K562 (cell line): ENCODE measurements at regions of chr12 and their contacts with region 1.

Region 1: GRCh38 chr12:122306407-122306806 is 40.1 kb upstream of the VPS33A start:
- DNase-seq: peak; percentile 41 to 72 (median 53)
- ATAC-seq: peak; percentile 99
- H3K4me3 ChIP-seq: no peak overlapping the region
- H3K27ac ChIP-seq: no peak overlapping the region
- H3K4me1 ChIP-seq: no peaks in the 10 kb centered on the region
- H3K27me3 ChIP-seq: no peaks in the 10 kb centered on the region
- CTCF ChIP-seq: peak; percentile 69 to 84 (median 71)
- EP300 ChIP-seq: no peak
- POLR2A ChIP-seq: no peak
- RAD21 ChIP-seq: peak; percentile 53 to 74

Region 2: DNA sequence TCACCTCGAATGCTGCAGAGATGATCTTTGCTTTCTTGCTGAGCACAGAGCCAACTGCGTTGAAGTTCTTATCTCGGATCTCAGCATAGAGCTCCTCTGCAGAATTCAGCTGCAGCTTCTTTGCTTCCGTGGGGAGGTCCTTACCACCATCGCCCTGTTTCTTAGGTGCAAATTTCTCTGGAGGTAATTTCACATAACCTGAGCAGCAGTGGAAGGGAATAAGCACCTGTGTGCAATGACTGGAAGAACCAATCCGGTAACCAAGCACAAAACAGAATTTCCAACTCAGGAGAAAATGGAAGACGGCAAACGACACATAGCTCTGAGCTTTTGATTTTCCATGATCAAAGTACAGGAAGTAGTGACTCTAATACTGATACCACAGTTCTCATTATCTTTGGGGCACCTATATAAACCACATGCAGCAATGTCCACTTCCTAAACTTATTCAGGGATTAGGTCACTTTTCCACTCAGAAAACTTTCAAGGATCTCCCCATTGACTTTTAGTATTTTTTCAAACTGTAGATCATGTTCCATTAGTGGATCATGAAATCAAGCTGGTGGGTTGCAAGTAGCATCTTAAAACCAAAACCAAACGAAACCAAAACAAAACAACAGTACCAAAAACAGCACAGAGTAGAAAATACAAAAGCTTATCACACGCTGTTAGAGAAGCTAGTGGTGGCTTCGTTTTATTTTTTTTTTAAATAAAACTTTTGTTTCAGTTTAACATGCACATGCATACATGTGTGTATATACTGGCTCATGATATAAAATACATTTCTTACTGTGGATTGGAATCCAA is 61.6 kb before region 1 on chr12:
- CTCF ChIA-PET with region 1: no interaction called
- POLR2A ChIA-PET with region 1: no interaction called
- in situ Hi-C with region 1: no loop called
- intact Hi-C with region 1: no loop called
- DNase-seq: no peak
- ATAC-seq: peak; percentile 65
- H3K4me3 ChIP-seq: no peak overlapping the region
- H3K27ac ChIP-seq: peak overlapping the region; percentile 13; the same call in 1 of the 3 replicates
- H3K4me1 ChIP-seq: peaks cover 2 to 9% of the 10 kb centered on the region in 2 experiments; a peak in 3 of 5 replicates
- H3K27me3 ChIP-seq: no peaks in the 10 kb centered on the region
- CTCF ChIP-seq: no peak
- EP300 ChIP-seq: no peak
- POLR2A ChIP-seq: no peak
- RAD21 ChIP-seq: no peak

Region 3: GRCh38 chr12:122356192-122356635 is 49.8 kb after region 1 on chr12:
- CTCF ChIA-PET with region 1: interaction called, 4 read pairs
- POLR2A ChIA-PET with region 1: no interaction called
- in situ Hi-C with region 1: no loop called
- intact Hi-C with region 1: loop called (anchors 1 kb)
- DNase-seq: peak; percentile 33 to 69 (median 56)
- ATAC-seq: peak; percentile 98
- H3K4me3 ChIP-seq: no peak overlapping the region
- H3K27ac ChIP-seq: no peak overlapping the region
- H3K4me1 ChIP-seq: no peaks in the 10 kb centered on the region
- H3K27me3 ChIP-seq: no peaks in the 10 kb centered on the region
- CTCF ChIP-seq: peak; percentile 60 to 82 (median 82)
- EP300 ChIP-seq: no peak
- POLR2A ChIP-seq: no peak
- RAD21 ChIP-seq: peak; percentile 72 to 74